Lower leg skin (tissue), 4 donors: ENCODE measurements at regions of chr17 and their contacts with region 1.

Region 1: GRCh38 chr17:5832886-5833285 is 237.3 kb upstream of the WSCD1 start:
- DNase-seq: no peak
- H3K4me3 ChIP-seq: no peak overlapping the region
- CTCF ChIP-seq: no peak
- POLR2A ChIP-seq: no peak

Region 2: GRCh38 chr17:4771519-4772234 is 1061.2 kb before region 1 on chr17 and contains the start of gene TM4SF5:
- intact Hi-C with region 1: loop called (anchors 10 kb)
- DNase-seq: no peak
- H3K4me3 ChIP-seq: no peak within 1 kb of the TSS
- CTCF ChIP-seq: no peak
- POLR2A ChIP-seq: no peak
- total RNA-seq, gene TM4SF5: not detected

Region 3: GRCh38 chr17:5758651-5759050 is 74.2 kb before region 1 on chr17:
- intact Hi-C with region 1: loop called (anchors 10 kb)
- DNase-seq: peak in 1 of 2 donors; percentile 62
- H3K4me3 ChIP-seq: no peak overlapping the region
- CTCF ChIP-seq: no peak
- POLR2A ChIP-seq: no peak

Region 4: DNA sequence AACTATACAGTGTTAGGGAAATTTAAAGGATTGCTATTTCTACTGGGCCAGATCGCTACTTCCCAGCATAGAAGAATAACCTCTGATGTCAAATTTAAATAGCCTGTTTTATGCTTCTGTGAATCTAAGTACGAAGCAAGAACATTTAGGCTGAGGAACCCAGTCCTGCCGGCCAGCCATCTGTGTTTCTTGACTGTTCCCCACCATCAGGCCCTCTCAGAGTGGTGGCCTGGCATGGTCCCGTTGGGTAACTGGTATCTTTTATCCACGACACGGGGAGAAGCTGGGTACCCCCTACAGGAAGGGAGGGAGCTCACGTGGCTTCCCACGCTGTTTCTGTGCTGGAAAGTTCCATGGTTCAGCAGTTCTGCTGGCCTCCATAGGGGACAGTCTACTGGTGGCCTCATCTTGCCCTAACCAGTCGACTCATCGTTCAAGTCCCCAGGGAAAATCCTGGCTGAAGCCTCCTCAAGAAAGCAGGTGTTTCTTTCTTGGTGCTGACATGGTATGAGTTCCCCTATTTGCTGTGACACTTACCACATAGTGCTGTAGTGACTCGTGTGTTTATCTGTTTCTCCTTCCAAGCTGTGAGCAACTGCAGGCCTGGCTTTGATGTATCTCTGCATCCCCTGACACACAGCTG is 46.9 kb before region 1 on chr17:
- intact Hi-C with region 1: no loop called
- DNase-seq: no peak
- H3K4me3 ChIP-seq: no peak overlapping the region
- CTCF ChIP-seq: no peak
- POLR2A ChIP-seq: no peak

Region 5: DNA sequence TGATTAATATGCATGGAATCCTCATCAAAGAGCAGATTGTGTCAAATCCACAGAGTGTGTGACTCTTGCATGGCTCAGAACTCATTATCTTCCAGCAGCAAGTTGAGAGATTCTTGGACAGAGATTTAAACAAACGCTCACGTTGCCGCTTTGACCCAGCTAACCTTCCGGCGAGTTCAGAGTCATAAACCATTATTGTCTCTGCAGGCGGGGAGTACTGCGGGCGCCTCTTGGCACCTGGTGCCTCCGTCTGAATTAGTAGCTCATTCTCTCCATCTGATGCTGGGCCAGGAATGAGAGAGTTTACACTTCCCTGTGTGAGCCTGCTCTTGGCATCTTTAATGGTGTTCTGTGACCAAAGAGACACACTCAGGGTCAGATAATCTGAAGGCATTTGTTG is 98.7 kb after region 1 on chr17:
- intact Hi-C with region 1: no loop called
- DNase-seq: no peak
- H3K4me3 ChIP-seq: no peak overlapping the region
- CTCF ChIP-seq: no peak
- POLR2A ChIP-seq: no peak

Region 6: GRCh38 chr17:6000426-6000825 is 167.5 kb after region 1 on chr17:
- intact Hi-C with region 1: no loop called
- DNase-seq: no peak
- H3K4me3 ChIP-seq: no peak overlapping the region
- CTCF ChIP-seq: no peak
- POLR2A ChIP-seq: no peak